ENCODE measurements at regions of chr6 and their contacts with region 1.

Region 1: DNA sequence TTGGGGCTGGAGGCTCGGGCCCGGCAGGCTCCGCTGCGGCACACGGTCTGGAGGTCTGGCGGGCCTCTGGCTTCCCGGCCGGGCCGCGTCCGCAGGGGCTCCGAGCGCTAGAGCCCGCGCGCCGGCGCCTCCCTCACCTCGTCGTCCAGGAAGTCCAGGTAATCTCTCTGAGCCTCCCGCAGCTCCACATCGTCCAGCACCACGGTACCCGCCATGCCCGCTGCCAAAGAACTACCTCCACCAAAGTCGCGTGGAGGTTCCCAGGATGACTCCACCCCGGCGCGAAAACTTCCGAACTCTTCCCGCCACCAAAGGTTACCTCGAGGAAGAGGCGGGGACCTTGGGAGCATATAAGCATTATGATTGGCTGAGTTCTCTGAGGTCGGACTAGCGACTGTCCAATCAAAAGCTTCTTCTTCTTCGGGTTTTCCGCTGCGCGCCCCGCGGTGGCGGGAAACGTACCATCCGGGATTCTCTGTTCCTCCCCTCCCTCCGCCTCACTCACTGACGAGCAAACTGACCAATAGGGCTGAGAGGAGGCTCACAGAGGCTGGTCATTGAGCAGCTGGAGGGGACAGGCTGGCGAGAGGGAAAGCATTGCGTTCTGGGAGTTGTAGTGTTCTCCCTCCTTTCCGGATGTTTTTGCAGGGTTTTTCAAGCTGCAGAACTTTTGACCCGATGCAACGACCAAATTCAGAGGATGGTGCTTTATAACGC is at the start of gene MCM3:
- DNase-seq: peak; percentile 76 to 98 (median 97)
- ATAC-seq: peak; percentile 98
- H3K4me3 ChIP-seq: peak within 1 kb of the TSS; percentile 77
- H3K4me3 Mint-ChIP-seq: peak within 1 kb of the TSS in 4 of 10 donors; percentile 42 to 89 (median 58)
- H3K27ac ChIP-seq: peak within 1 kb of the TSS; percentile 74
- H3K27ac Mint-ChIP-seq: peak within 1 kb of the TSS in 6 of 9 donors; percentile 28 to 77 (median 30)
- H3K4me1 ChIP-seq: peaks cover 32 to 33% of the 10 kb centered on the region in 2 donors
- H3K4me1 Mint-ChIP-seq: peaks cover 22 to 58% (median 48%) of the 10 kb centered on the region in 7 donors
- H3K27me3 ChIP-seq: no peaks in the 10 kb centered on the region
- H3K27me3 Mint-ChIP-seq: no peaks in the 10 kb centered on the region
- total RNA-seq, gene MCM3: 20.3 to 157 (median 45.2) TPM

Region 2: DNA sequence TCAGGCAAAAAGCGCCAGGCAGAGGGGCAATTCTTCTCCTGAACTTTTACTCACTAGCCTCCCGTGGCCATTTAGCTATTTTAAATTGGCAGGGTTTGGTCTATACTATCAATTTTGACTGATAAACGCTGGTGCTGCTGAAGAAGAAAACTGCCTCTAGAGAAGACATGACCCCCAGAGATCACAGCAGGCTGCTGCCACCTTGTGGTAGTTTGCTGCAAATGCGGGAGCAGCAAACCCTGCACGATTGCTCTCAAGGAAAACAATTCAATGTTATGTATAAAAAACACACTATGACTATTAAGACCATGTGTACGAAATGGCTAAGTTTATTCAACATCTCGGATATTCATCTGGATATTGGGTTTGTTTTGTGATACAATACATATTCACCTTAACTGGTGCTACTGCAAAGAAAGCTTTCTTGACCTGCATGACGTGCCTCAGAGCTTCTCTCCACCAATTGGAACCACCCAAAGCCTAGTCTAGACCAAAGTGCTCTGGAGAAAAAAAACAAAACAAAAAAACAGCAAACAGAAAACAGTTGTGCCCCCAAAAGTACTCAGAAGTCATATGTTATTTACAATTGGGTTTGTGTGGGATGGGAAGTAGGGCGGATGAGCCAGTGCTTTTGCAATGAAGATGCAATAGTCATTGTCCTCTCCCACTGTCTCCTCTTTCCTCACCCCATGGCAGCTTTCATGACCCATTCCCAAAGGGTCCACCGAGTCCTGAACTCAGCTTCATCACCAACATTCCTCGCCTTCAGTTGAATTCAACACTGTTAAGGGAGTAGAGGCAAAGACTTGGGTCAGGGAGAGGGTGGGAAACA is 20.7 kb before region 1 on chr6:
- CTCF ChIA-PET with region 1: interaction called, 8 read pairs
- POLR2A ChIA-PET with region 1: interaction called, 3 read pairs
- intact Hi-C with region 1: loop called in 1 of 2 experiments (anchors 1 kb)
- DNase-seq: peak; percentile 42 to 73 (median 64)
- ATAC-seq: peak; percentile 91
- H3K4me3 ChIP-seq: no peak overlapping the region
- H3K4me3 Mint-ChIP-seq: peak overlapping the region in 4 of 10 donors; percentile 25 to 44 (median 40)
- H3K27ac ChIP-seq: no peak overlapping the region
- H3K27ac Mint-ChIP-seq: peak overlapping the region in 7 of 9 donors; percentile 1 to 90 (median 18)
- H3K4me1 ChIP-seq: peaks cover 0 to 3% of the 10 kb centered on the region in 2 donors
- H3K4me1 Mint-ChIP-seq: peaks cover 3 to 19% (median 15%) of the 10 kb centered on the region in 7 donors
- H3K27me3 ChIP-seq: no peaks in the 10 kb centered on the region
- H3K27me3 Mint-ChIP-seq: no peaks in the 10 kb centered on the region

Region 3: DNA sequence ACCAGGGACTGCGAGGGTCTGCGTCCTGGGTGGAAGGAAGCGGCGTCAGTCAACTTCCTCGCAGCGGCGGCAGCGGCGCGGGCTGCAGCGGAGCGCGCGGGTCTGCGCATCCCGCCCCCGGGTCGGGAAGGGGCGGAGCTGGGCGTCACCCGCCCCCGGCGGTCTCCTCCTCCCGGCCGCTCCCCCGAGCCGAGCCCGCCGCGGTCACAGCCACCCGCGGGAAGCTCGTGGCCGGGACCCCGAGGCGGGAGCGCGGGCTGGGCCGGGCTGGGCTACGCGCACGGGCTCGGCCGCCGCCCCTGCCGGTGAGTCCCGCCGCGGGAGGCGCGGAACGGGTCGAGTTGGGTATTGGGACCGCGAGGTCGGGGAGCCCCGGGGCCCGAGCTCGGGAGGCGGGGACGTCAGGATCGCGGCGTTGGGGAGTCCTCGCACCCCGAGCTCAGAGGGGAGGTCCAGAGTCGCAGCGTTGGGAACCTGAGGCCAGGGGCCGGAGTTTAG is 77.4 kb after region 1 on chr6 and contains the start of gene PAQR8:
- CTCF ChIA-PET with region 1: interaction called, 60 read pairs
- POLR2A ChIA-PET with region 1: interaction called, 92 read pairs
- intact Hi-C with region 1: loop called (anchors 1 kb)
- DNase-seq: peak; percentile 77 to 89 (median 86)
- ATAC-seq: peak; percentile 95
- H3K4me3 ChIP-seq: peak within 1 kb of the TSS; percentile 90
- H3K4me3 Mint-ChIP-seq: peak within 1 kb of the TSS; percentile 83 to 100 (median 98)
- H3K27ac ChIP-seq: peak within 1 kb of the TSS; percentile 86
- H3K27ac Mint-ChIP-seq: peak within 1 kb of the TSS; percentile 90 to 99 (median 94)
- H3K4me1 ChIP-seq: peaks cover 25 to 28% of the 10 kb centered on the region in 2 donors
- H3K4me1 Mint-ChIP-seq: peaks cover 25 to 55% (median 45%) of the 10 kb centered on the region in 7 donors
- H3K27me3 ChIP-seq: no peaks in the 10 kb centered on the region
- H3K27me3 Mint-ChIP-seq: peaks cover 0 to 9% (median 0%) of the 10 kb centered on the region in 5 donors
- total RNA-seq, gene PAQR8: 7.5 to 46.2 (median 21.6) TPM

Region 4: GRCh38 chr6:52399511-52400312 is 115.1 kb after region 1 on chr6:
- CTCF ChIA-PET with region 1: interaction called, 88 read pairs
- POLR2A ChIA-PET with region 1: interaction called, 89 read pairs
- intact Hi-C with region 1: loop called (anchors 1 kb)
- DNase-seq: peak in 7 of 9 donors; percentile 21 to 60 (median 48)
- ATAC-seq: peak; percentile 58
- H3K4me3 ChIP-seq: no peak overlapping the region
- H3K4me3 Mint-ChIP-seq: peak overlapping the region; percentile 26 to 84 (median 74)
- H3K27ac ChIP-seq: peak overlapping the region; percentile 89
- H3K27ac Mint-ChIP-seq: peak overlapping the region; percentile 91 to 100 (median 96)
- H3K4me1 ChIP-seq: peaks cover 48 to 70% of the 10 kb centered on the region in 2 donors
- H3K4me1 Mint-ChIP-seq: peaks cover 40 to 96% (median 77%) of the 10 kb centered on the region in 7 donors
- H3K27me3 ChIP-seq: no peaks in the 10 kb centered on the region
- H3K27me3 Mint-ChIP-seq: peaks cover 0 to 3% (median 0%) of the 10 kb centered on the region in 5 donors

Region 5: DNA sequence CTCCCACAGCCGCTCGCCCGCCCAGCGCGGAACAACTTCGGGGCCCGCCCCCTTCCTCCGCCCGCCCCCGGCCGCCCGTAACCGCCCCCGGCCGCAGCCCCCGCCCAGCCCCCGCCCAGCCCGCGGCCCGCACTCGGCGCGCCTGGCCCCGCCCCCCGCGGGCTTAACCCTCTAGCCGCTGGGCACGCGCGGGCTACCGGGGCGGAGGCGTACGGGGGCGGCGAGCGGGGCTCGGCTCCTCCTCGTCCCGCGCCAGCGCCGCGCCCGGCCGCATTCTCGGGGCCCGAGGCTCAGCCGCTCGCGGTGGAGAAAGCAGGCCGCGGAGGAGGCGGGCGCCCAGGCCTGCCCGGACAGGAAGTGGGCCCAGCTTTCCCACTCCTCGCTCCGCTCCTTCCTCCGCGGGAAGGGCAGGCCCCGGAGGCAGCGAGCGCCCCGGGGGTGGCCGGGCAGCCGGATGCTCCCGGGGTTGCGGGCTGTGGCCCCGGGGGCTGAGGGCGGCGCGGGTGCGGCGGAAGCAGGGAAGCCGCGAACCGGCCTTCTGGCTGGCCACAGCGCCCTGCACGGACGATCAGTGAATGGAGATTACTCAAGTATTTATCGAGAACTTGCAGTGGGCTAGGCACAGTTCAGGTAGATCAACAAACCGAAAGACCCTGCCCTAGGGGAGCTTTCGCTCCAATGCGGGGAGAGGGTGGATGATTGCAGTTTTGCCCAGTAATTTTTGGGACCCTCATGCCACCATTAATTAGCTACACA is 292.6 kb after region 1 on chr6 and contains the start of gene TRAM2:
- CTCF ChIA-PET with region 1: interaction called, 3 read pairs
- POLR2A ChIA-PET with region 1: no interaction called
- intact Hi-C with region 1: loop called (anchors 1 kb)
- DNase-seq: peak; percentile 67 to 86 (median 79)
- ATAC-seq: peak; percentile 90
- H3K4me3 ChIP-seq: peak within 1 kb of the TSS; percentile 76
- H3K4me3 Mint-ChIP-seq: peak within 1 kb of the TSS; percentile 83 to 95 (median 88)
- H3K27ac ChIP-seq: peak within 1 kb of the TSS; percentile 80
- H3K27ac Mint-ChIP-seq: peak within 1 kb of the TSS; percentile 72 to 93 (median 89)
- H3K4me1 ChIP-seq: peaks cover 27 to 34% of the 10 kb centered on the region in 2 donors
- H3K4me1 Mint-ChIP-seq: peaks cover 35 to 60% (median 49%) of the 10 kb centered on the region in 7 donors
- H3K27me3 ChIP-seq: no peaks in the 10 kb centered on the region
- H3K27me3 Mint-ChIP-seq: peaks cover 0 to 20% (median 0%) of the 10 kb centered on the region in 5 donors
- total RNA-seq, gene TRAM2: 8.9 to 10.9 (median 10.3) TPM

Region 6: DNA sequence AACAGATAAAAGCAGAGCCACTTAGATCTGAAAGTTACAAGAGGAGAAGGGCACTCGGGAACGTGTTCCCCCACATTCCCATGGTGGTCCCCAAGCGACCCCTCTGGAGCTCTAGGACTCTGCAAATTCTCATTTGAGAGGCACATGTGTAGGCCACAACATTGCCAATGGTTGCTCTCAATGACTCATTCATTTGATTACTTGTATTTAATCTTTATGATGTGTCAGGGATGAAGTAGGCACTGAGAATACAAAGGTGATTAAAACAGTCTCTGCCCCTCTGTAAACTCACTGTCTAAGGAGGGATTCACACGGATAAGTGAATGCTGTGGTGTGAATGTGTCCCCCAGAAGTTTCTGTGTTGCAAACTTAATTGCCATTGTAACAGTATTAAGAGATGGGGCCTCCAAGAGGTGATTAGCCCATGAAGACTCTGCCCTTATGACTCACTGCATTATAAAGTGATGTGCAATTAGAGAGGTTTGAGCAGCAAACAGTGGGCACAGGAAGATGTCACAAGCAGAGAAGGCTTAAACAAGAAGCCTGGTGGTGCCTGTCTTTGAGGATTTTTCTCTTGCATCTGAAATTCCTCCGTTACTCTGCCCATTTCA is 326.2 kb after region 1 on chr6:
- CTCF ChIA-PET with region 1: no interaction called
- POLR2A ChIA-PET with region 1: no interaction called
- intact Hi-C with region 1: no loop called
- DNase-seq: no peak
- ATAC-seq: no peak
- H3K4me3 ChIP-seq: no peak overlapping the region
- H3K4me3 Mint-ChIP-seq: no peak overlapping the region
- H3K27ac ChIP-seq: no peak overlapping the region
- H3K27ac Mint-ChIP-seq: no peak overlapping the region
- H3K4me1 ChIP-seq: no peaks in the 10 kb centered on the region
- H3K4me1 Mint-ChIP-seq: peaks cover 0 to 2% (median 0%) of the 10 kb centered on the region in 7 donors
- H3K27me3 ChIP-seq: peaks cover 3 to 5% of the 10 kb centered on the region in 2 donors
- H3K27me3 Mint-ChIP-seq: peaks cover 0 to 22% (median 4%) of the 10 kb centered on the region in 5 donors

Region 7: DNA sequence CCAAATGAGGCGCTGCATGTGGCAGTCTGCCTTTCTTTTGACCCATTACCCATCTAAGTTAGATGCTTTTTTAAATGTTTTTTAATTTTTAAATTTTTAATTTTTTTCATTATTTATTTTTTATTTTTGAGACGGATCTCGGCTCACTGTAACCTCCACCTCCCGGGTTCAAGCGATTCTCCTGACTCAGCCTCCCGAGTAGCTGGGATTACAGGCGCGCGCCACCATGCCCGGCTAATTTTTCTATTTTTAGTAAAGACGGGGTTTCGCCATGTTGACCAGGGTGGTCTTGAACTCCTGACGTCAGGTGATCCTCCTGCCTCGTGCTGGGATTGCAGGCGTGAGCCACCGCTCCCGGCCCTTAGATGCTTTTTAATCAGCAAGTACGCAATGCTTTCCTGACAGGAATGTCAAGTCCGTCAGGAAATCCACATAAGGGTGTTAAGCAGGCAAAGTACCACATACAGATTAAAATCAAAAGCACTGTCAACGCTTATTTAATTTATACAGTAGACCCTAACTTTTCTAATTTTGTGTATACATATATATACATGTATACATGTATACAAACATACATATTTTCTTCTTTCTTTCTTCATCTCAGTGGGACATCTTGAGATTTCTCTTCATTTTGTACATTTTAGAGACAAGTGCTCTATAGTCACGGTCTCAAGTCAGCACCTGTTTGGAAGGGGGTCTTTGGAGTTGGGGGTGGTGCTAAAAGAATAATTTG is 711.5 kb after region 1 on chr6:
- CTCF ChIA-PET with region 1: interaction called, 3 read pairs
- POLR2A ChIA-PET with region 1: interaction called, 6 read pairs
- intact Hi-C with region 1: loop called (anchors 1 to 5 kb)
- DNase-seq: peak in 5 of 9 donors; percentile 21 to 43 (median 35)
- ATAC-seq: no peak
- H3K4me3 ChIP-seq: peak overlapping the region; percentile 83
- H3K4me3 Mint-ChIP-seq: peak overlapping the region; percentile 87 to 98 (median 94)
- H3K27ac ChIP-seq: peak overlapping the region; percentile 43
- H3K27ac Mint-ChIP-seq: peak overlapping the region; percentile 97 to 100 (median 99)
- H3K4me1 ChIP-seq: peaks cover 4 to 5% of the 10 kb centered on the region in 2 donors
- H3K4me1 Mint-ChIP-seq: peaks cover 10 to 37% (median 29%) of the 10 kb centered on the region in 7 donors
- H3K27me3 ChIP-seq: no peaks in the 10 kb centered on the region
- H3K27me3 Mint-ChIP-seq: peaks cover 0 to 10% (median 0%) of the 10 kb centered on the region in 5 donors

Region 8: DNA sequence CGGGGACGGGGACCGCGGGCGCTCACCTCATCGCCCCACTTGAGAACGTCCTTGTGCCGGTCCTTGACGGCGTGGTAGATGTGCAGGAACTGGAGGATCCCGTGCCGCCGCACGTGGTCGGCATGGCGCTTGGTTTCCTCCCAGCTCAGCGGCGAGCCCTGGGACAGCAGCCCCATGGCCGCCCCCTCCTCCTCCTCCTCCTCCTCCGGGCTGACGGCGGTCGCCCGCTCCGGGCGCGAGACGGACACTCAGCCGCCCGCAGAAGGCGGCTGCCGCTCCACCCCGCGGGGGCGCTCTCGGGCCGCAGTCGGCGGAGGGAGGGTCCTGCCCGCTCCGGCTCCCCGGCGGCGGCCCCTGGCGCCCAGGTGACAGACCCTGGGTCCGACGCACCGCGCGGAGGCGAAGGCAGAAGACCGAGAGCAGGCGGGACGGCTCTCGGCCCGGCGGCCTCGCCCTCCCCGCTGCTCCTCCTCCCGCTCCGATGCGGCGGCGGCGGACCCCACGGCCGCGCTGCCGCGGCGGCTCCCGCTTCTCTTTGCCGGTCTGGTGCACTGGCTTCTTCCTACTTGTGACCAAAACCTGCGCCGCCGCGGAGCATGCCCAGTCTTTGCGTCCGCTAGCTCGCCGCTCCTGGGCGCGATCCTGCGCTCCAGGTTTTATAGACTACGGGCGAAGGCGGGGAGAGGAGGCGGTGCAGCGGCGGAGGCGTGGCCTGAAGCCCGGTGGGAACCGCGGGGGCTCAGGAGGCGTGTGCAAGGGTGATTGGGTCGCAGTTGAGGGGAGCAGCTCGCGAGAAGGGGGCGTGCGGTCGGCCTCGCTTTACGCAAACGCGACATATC is 1260.1 kb after region 1 on chr6 and contains the start of gene GCLC:
- CTCF ChIA-PET with region 1: no interaction called
- POLR2A ChIA-PET with region 1: no interaction called
- intact Hi-C with region 1: loop called in 1 of 2 experiments (anchors 5 kb)
- DNase-seq: peak; percentile 70 to 85 (median 81)
- ATAC-seq: peak; percentile 75
- H3K4me3 ChIP-seq: peak within 1 kb of the TSS; percentile 83
- H3K4me3 Mint-ChIP-seq: peak within 1 kb of the TSS; percentile 87 to 100 (median 96)
- H3K27ac ChIP-seq: peak within 1 kb of the TSS; percentile 67
- H3K27ac Mint-ChIP-seq: peak within 1 kb of the TSS; percentile 84 to 94 (median 91)
- H3K4me1 ChIP-seq: peaks cover 22 to 23% of the 10 kb centered on the region in 2 donors
- H3K4me1 Mint-ChIP-seq: peaks cover 29 to 80% (median 66%) of the 10 kb centered on the region in 7 donors
- H3K27me3 ChIP-seq: no peaks in the 10 kb centered on the region
- H3K27me3 Mint-ChIP-seq: peaks cover 0 to 21% (median 0%) of the 10 kb centered on the region in 5 donors
- total RNA-seq, gene GCLC: 18.5 to 37.5 (median 27.6) TPM